Caco-2 (cell line): ENCODE measurements at regions of chr6 and their contacts with region 1.

Region 1: GRCh38 chr6:26568601-26569432 is 27.9 kb upstream of the ABT1 start:
- DNase-seq: peak; percentile 90 to 96
- H3K4me3 ChIP-seq: peak overlapping the region; percentile 49
- H3K4me3 Mint-ChIP-seq: peak overlapping the region; percentile 95
- H3K27ac Mint-ChIP-seq: peak overlapping the region; percentile 95
- H3K4me1 ChIP-seq: 0 out of 2 replicates have a peak, but pooled peaks cover 5% of the 10 kb centered on the region
- H3K4me1 Mint-ChIP-seq: peaks cover 22% of the 10 kb centered on the region
- H3K27me3 ChIP-seq: no peaks in the 10 kb centered on the region
- H3K27me3 Mint-ChIP-seq: peaks cover 9% of the 10 kb centered on the region
- CTCF ChIP-seq: peak in 1 of 2 experiments; percentile 31

Region 2: GRCh38 chr6:25922301-25922700 is 646.5 kb before region 1 on chr6:
- CTCF ChIA-PET with region 1: no interaction called
- POLR2A ChIA-PET with region 1: no interaction called
- intact Hi-C with region 1: no loop called
- DNase-seq: no peak
- H3K4me3 ChIP-seq: no peak overlapping the region
- H3K4me3 Mint-ChIP-seq: no peak overlapping the region
- H3K27ac Mint-ChIP-seq: no peak overlapping the region
- H3K4me1 ChIP-seq: no peaks in the 10 kb centered on the region
- H3K4me1 Mint-ChIP-seq: no peaks in the 10 kb centered on the region
- H3K27me3 ChIP-seq: no peaks in the 10 kb centered on the region
- H3K27me3 Mint-ChIP-seq: no peaks in the 10 kb centered on the region
- CTCF ChIP-seq: no peak

Region 3: GRCh38 chr6:26520853-26521599 is 47.8 kb before region 1 on chr6:
- CTCF ChIA-PET with region 1: no interaction called
- POLR2A ChIA-PET with region 1: no interaction called
- intact Hi-C with region 1: loop called (anchors 5 kb)
- DNase-seq: peak; percentile 90 to 91
- H3K4me3 ChIP-seq: peak overlapping the region; percentile 94
- H3K4me3 Mint-ChIP-seq: peak overlapping the region; percentile 92
- H3K27ac Mint-ChIP-seq: peak overlapping the region; percentile 96
- H3K4me1 ChIP-seq: peaks cover 10% of the 10 kb centered on the region
- H3K4me1 Mint-ChIP-seq: peaks cover 35% of the 10 kb centered on the region
- H3K27me3 ChIP-seq: no peaks in the 10 kb centered on the region
- H3K27me3 Mint-ChIP-seq: peaks cover 3% of the 10 kb centered on the region
- CTCF ChIP-seq: no peak

Region 4: DNA sequence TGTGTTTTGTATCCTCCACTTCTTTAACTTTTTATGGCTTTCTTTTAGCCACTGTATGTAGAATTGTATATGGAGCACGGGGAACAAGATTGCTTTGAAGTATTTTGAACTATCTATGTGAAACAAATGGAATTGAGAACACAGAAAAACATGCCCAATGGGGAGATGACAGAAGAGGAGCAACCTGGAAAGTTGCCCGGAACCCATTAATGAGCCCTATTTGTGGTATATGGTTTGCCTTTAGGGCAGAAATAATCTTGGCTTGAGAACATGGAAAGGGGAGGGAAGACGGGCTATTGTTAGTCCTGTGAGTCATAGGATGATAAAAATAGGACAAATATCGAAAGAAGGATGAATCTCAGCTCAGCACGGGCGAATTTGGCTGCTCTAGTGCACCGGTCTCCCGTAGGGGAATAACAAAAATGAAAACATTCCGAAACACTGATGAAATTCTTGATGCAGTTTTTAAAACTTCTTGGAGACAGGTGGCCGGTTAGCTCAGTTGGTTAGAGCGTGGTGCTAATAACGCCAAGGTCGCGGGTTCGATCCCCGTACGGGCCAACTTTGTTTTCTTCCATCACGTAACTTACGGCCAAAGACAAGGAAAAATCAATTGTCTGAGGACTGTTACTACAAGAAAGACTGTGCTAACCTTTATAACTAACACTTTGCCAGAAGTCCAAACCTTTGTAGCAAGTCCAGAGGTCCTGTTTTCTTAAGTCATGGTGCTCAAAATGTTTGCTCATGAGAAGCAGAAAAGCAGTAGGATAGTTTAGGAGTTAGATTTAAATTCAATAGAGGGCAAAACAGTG is 15.0 kb before region 1 on chr6:
- CTCF ChIA-PET with region 1: interaction called, 5 read pairs
- POLR2A ChIA-PET with region 1: no interaction called
- intact Hi-C with region 1: loop called (anchors 1 kb)
- DNase-seq: peak; percentile 74 to 86
- H3K4me3 ChIP-seq: peak overlapping the region; percentile 55
- H3K4me3 Mint-ChIP-seq: no peak overlapping the region
- H3K27ac Mint-ChIP-seq: no peak overlapping the region
- H3K4me1 ChIP-seq: peaks cover 5% of the 10 kb centered on the region; the same call in 1 of the 2 replicates
- H3K4me1 Mint-ChIP-seq: peaks cover 8% of the 10 kb centered on the region
- H3K27me3 ChIP-seq: no peaks in the 10 kb centered on the region
- H3K27me3 Mint-ChIP-seq: no peaks in the 10 kb centered on the region
- CTCF ChIP-seq: no peak

Region 5: DNA sequence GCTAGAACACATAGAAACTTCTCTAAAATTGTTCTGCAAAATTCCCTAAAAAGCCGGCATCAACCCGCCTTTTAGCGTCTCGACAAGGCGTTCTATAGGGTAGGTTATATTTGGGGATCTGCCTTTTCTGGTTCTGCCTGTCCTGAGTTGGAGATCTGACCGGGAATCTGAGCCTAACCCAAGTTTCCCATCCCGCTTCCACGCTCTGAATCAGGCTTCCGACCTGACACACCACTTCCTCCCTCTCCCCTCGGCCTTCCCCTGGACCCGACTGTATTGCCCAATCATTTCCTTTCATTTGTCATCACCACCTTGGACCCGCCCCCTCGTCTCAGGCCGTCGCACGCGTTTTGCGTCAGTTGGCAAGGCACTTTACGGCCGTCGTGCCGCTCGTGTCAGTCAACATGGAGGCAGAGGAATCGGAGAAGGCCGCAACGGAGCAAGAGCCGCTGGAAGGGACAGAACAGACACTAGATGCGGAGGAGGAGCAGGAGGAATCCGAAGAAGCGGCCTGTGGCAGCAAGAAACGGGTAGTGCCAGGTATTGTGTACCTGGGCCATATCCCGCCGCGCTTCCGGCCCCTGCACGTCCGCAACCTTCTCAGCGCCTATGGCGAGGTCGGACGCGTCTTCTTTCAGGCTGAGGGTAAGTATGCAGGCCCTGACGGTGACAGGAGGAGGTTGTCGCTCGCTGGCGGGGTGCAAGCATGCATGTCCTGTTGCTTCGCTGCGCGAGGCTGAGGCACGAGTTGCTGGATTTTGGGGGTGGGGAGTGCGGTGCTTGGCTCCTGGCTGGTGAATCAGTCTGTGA is 28.0 kb after region 1 on chr6 and contains the start of gene ABT1:
- CTCF ChIA-PET with region 1: interaction called, 45 read pairs
- POLR2A ChIA-PET with region 1: no interaction called
- intact Hi-C with region 1: loop called (anchors 1 kb)
- DNase-seq: peak; percentile 97 to 98
- H3K4me3 ChIP-seq: peak within 1 kb of the TSS; percentile 91
- H3K4me3 Mint-ChIP-seq: no peak within 1 kb of the TSS
- H3K27ac Mint-ChIP-seq: no peak within 1 kb of the TSS
- H3K4me1 ChIP-seq: no peaks in the 10 kb centered on the region
- H3K4me1 Mint-ChIP-seq: no peaks in the 10 kb centered on the region
- H3K27me3 ChIP-seq: no peaks in the 10 kb centered on the region
- H3K27me3 Mint-ChIP-seq: peaks cover 3% of the 10 kb centered on the region
- CTCF ChIP-seq: no peak
- total RNA-seq, gene ABT1: 15.1 and 17.0 TPM in 2 replicates